Stomach (tissue), 19 donors: ENCODE measurements at regions of chr3 and their contacts with region 1.

Region 1: DNA sequence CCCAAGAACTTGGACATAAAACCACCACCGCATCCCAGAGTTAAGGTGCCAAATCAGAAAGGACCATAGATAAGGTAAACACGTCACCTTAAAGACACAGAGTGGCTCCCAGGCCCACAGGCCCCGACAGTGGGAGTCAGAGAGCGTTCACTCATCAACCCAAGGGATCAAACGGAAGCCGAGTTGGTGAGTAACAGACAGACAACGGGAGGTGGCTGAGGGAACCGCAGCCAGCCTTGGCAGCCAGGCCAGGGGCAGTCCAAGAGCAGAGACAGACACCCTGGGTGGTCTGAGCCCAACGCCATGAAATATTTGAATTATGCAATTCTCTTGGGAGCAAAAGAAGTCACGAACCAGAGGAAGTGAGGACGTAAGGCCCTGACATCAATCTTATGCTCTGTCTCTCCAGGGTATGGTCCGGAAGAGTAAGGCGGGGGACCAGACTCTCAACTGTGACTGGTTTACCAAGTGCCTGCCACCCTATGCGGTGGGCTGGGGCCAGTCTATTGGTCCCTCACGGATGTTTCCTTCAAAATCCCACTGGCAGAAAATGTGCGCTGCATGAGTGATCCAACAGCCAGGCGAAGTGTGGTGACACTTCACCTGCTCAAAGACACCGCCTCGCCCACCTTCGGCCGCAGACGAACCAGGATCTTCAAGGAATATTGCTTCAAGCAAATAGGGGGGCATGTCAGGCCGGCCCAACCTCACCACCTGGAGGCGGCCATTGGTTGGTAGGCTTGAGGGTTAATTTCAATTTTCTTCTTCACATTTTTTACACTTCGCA is 34.3 kb downstream of the TMEM44 start:
- DNase-seq: no peak
- H3K4me3 ChIP-seq: no peak overlapping the region
- H3K27ac ChIP-seq: no peak overlapping the region
- H3K4me1 ChIP-seq: peaks cover 0 to 9% (median 3%) of the 10 kb centered on the region in 4 donors
- H3K27me3 ChIP-seq: no peaks in the 10 kb centered on the region
- CTCF ChIP-seq: no peak
- EP300 ChIP-seq: no peak
- POLR2A ChIP-seq: no peak

Region 2: DNA sequence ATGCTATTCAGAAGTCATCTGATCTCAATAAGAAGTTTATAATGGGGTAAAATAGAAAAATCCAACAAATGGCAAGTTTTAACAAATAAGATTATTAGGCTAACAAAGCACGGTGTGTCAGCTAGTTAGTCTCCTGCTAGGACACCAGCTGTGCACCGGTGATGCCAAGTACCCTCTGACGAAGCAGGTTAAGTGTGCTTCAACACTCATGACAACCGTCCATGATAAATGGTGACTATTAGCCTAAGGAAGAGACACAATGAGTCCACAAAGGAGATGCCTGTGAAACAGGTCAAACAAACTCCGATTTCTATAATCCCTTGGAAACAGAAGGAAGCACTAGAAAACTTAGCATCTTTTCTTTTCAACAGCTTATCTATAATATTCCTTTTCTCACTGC is 148.6 kb before region 1 on chr3:
- intact Hi-C with region 1: no loop called
- DNase-seq: peak in 1 of 2 donors; percentile 42
- H3K4me3 ChIP-seq: no peak overlapping the region
- H3K27ac ChIP-seq: no peak overlapping the region
- H3K4me1 ChIP-seq: peaks cover 0 to 21% (median 10%) of the 10 kb centered on the region in 4 donors
- H3K27me3 ChIP-seq: no peaks in the 10 kb centered on the region
- CTCF ChIP-seq: no peak
- EP300 ChIP-seq: no peak
- POLR2A ChIP-seq: no peak

Region 3: GRCh38 chr3:194472290-194472920 is 126.6 kb before region 1 on chr3:
- intact Hi-C with region 1: loop called (anchors 5 kb)
- DNase-seq: peak in 1 of 2 donors; percentile 79
- H3K4me3 ChIP-seq: no peak overlapping the region
- H3K27ac ChIP-seq: no peak overlapping the region
- H3K4me1 ChIP-seq: peaks cover 0 to 59% (median 31%) of the 10 kb centered on the region in 4 donors
- H3K27me3 ChIP-seq: no peaks in the 10 kb centered on the region
- CTCF ChIP-seq: peak in 6 of 7 experiments; percentile 31 to 98 (median 94)
- EP300 ChIP-seq: no peak
- POLR2A ChIP-seq: no peak

Region 4: GRCh38 chr3:194647747-194648146 is 48.8 kb after region 1 on chr3:
- intact Hi-C with region 1: no loop called
- DNase-seq: no peak
- H3K4me3 ChIP-seq: no peak overlapping the region
- H3K27ac ChIP-seq: no peak overlapping the region
- H3K4me1 ChIP-seq: no peaks in the 10 kb centered on the region
- H3K27me3 ChIP-seq: no peaks in the 10 kb centered on the region
- CTCF ChIP-seq: no peak
- EP300 ChIP-seq: no peak
- POLR2A ChIP-seq: no peak

Region 5: DNA sequence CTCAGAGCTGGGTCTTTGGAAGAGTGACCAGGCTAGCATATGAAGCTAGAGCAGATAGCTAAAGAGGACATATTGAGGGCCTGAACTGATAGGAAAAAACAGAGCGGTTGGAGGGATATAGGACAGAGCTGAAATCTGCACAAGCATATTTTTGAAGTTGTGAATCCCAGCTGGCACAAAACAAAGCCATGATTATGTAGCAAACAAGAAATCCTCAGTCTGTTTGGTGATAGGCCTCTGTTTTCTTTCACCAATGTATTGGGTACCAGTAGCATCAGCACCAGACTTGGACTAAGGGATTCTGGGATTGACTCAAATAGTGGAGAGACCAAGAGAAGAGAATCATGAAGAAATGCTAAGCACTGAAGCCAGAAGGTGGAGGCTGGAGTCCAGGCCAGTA is 237.7 kb after region 1 on chr3:
- intact Hi-C with region 1: no loop called
- DNase-seq: no peak
- H3K4me3 ChIP-seq: no peak overlapping the region
- H3K27ac ChIP-seq: no peak overlapping the region
- H3K4me1 ChIP-seq: no peaks in the 10 kb centered on the region
- H3K27me3 ChIP-seq: no peaks in the 10 kb centered on the region
- CTCF ChIP-seq: no peak
- EP300 ChIP-seq: no peak
- POLR2A ChIP-seq: no peak